Naive thymus-derived CD8-positive, alpha-beta T cell (primary cell): ENCODE measurements at regions of chr1 and their contacts with region 1.

Region 1: GRCh38 chr1:110619412-110620249 is 13.5 kb upstream of the KCNA2 start:
- DNase-seq: peak; percentile 76 to 96 (median 92)
- ATAC-seq: peak; percentile 87
- H3K4me3 Mint-ChIP-seq: peak overlapping the region; percentile 81 to 93 (median 88)
- H3K27ac Mint-ChIP-seq: peak overlapping the region; percentile 88 to 97 (median 95)
- H3K4me1 Mint-ChIP-seq: peaks cover 29 to 50% (median 38%) of the 10 kb centered on the region in 4 donors
- H3K27me3 Mint-ChIP-seq: no peaks in the 10 kb centered on the region

Region 2: DNA sequence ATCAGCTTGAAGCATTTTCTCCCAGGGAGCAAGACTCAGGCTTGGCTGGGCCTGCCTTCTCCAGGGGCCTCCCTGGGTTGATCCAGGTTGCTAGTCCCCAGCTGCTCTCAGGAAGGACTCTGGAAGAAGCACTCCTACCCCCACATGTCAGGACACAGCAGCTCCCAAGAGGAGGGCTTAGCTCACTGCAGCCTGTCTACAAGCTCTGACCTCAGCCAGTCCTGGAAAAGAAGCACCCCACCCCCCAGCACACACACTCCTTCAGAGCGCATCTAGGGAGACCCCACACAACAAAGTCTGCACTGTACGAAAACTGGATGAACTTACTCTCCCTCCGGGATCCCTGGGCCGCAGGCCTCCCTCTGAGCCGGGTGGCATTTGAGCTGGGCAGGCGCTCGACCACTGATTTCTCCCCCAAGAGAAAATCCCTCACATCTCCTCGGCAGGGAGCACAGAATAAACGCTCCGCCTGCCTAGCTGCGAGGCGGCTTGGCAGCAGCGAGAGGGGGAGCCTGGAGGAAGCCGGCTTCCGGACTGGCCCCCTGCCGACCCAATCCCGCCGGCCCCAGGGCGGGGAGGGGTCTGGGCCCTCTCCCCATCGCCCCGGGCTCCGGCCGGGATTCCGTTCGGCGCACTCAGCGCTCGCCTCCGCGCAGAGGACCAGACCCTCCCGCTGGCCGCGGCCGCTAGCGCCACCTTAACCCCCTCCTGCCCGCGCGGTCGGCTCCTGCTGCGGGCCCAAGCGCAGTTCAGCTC is 13.6 kb before region 1 on chr1 and contains the start of gene KCNA2:
- POLR2A ChIA-PET with region 1: interaction called, 13 read pairs
- DNase-seq: peak in 3 of 10 donors; percentile 11 to 14 (median 11)
- ATAC-seq: peak; percentile 44 to 48
- H3K4me3 Mint-ChIP-seq: peak within 1 kb of the TSS; percentile 79 to 92 (median 86)
- H3K27ac Mint-ChIP-seq: peak within 1 kb of the TSS in 1 of 10 donors; percentile 9
- H3K4me1 Mint-ChIP-seq: peaks cover 12 to 35% (median 14%) of the 10 kb centered on the region in 4 donors
- H3K27me3 Mint-ChIP-seq: peaks cover 16 to 74% (median 47%) of the 10 kb centered on the region in 5 donors
- polyA plus RNA-seq, gene KCNA2: not detected

Region 3: DNA sequence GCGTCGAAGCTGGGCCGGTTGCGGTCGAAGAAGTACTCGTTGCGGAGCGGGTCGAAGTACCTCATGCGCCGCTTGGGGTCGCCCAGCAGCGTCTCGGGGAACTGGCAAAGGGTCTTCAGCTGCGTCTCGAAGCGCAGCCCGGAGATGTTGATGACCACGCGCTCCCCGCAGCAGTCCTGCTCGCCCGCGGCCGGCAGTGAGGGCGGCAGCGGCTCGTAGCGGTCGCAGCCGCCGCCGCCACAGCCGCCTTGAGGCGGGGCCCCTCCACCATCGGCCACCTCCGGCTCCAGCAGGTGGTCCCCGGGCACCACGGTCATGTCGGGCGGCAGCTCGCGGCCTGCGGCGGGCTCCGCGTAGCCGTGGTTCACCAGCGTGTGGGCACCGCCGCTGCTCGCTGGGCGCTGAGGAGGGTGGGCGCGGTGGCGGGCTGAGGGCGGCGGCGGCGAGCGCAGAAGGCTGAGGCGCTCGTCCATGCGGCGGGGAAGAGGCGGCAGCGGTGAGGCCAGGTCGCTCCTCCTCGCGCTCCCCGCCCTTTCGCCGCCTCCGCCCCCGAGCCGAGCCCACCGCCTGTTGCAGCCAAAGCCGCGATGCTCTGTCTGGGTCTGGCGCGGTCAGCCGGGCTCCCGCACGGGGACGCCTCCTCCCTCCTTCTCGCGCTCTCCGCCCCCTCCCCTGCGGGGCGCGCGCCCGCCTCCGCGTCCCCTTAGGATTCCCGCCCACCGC is 54.9 kb after region 1 on chr1 and contains the start of gene KCNA3:
- POLR2A ChIA-PET with region 1: interaction called, 59 read pairs
- DNase-seq: peak; percentile 59 to 82 (median 69)
- ATAC-seq: peak; percentile 26 to 42
- H3K4me3 Mint-ChIP-seq: peak within 1 kb of the TSS; percentile 91 to 100 (median 98)
- H3K27ac Mint-ChIP-seq: peak within 1 kb of the TSS; percentile 93 to 100 (median 99)
- H3K4me1 Mint-ChIP-seq: peaks cover 26 to 59% (median 44%) of the 10 kb centered on the region in 4 donors
- H3K27me3 Mint-ChIP-seq: no peaks in the 10 kb centered on the region
- polyA plus RNA-seq, gene KCNA3: 55.6 to 67.9 (median 66.4) TPM

Region 4: DNA sequence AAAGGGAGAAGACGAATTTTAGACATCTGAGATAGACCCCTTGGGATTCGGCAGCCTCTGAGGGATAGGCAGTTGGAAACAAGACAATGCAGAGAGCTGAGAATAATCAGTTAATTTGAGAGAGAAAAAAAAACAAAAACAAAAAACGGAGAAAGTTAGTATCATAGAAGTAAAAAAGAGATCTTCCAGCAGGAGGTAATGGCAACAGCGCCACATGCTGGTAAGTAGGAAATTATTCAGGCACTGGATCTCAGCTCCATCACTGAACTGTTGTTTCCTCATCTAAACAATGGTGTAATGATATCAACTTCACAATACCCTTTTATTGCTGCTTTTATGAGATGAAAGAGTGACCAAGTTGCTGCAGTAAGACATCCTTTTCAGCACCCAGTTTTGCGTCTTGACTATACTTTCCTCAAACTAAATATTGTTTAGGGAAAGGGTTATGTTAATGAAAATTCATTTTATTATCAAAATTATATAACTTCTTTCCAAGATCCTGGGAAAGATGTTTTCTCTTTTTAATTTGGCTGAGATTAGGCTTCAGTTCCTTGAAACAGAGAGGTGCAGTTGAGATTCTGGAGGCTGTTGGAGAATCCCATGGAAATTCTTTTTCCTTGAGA is 146.5 kb after region 1 on chr1:
- POLR2A ChIA-PET with region 1: interaction called, 31 read pairs
- DNase-seq: peak; percentile 15 to 74 (median 56)
- ATAC-seq: peak; percentile 74 to 84
- H3K4me3 Mint-ChIP-seq: no peak overlapping the region
- H3K27ac Mint-ChIP-seq: peak overlapping the region in 2 of 10 donors; percentile 12 to 57
- H3K4me1 Mint-ChIP-seq: peaks cover 2 to 6% (median 2%) of the 10 kb centered on the region in 4 donors
- H3K27me3 Mint-ChIP-seq: peaks cover 4 to 30% (median 8%) of the 10 kb centered on the region in 5 donors